Posterior vena cava (tissue), 2 donors: ENCODE measurements at regions of chr19 and their contacts with region 1.

Region 1: DNA sequence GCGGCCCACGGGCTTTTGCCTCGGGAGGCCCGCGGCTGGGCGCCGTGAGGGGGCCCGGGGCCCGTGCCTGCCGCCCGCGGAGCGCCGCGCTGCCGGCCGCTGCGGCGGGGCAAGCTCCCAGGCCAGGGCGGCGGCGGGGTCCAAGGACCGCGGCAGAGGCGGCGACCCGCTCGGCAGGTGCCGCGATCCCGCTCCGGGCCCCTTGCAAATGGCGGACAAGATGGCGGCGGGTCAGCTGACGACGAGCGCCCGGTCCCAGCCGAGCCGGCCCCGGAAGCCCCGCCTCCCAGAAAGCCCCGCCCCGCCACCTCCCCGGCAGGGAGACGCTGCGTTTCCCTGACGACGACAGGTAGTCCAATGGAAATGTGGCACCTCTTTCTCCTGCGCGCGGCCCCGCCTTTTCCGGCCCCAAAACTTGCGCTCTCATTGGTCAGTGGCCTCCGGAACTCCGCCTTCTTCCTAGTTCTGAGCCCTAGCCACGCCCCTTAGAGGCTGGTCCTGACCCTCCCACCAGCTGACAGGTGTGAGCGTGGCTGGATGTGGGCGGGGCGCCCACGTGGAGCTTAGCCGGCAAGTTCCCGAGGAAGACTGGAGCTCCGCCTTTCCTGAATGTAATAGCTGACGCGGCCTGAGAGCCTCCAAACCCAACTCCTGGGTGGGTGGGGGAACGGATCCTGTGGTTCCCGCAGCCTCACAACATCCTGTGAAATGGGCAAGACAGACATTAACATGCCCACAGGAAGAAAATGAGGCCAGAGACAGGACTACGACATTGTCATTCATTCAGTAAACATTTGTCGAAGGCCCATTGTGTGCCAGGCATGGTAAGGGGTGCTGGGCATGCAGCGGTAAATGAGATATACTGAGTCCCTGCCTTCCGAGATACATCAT is at the start of gene AP3D1:
- DNase-seq: peak; percentile 100
- total RNA-seq, gene AP3D1: 73.9 to 93.3 TPM

Region 2: DNA sequence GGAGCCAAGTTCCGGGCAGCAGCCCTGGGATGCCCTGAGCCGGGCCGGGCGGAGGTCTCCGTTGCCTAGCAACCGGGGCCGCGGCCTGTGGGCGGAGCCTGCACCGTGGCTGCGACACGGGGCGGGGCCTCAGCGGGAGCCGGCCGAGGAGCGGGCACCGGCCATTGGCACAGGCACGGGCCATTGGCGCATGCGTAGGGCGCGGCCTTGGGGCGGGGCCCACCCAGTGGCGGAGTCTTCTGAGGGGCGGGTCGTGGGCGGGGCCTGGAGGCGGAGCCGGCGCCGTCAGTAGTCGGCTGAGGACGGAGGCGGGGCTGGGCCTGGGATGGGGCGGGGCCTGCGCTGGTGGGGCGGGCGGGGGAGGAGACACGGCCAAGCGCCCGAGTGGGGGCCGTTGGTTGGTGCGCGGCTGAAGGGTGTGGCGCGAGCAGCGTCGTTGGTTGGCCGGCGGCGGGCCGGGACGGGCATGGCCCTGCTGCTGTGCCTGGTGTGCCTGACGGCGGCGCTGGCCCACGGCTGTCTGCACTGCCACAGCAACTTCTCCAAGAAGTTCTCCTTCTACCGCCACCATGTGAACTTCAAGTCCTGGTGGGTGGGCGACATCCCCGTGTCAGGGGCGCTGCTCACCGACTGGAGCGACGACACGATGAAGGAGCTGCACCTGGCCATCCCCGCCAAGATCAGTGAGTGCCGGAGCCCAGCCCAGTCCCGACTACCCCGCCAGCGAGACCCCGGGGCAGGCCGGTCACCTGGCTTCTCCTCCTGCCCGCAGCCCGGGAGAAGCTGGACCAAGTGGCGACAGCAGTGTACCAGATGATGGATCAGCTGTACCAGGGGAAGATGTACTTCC is 54.9 kb before region 1 on chr19 and contains the start of gene IZUMO4:
- intact Hi-C with region 1: no loop called
- DNase-seq: peak; percentile 100
- total RNA-seq, gene IZUMO4: 0.90 to 2.4 TPM

Region 3: GRCh38 chr19:2391118-2391725 is 239.6 kb after region 1 on chr19:
- intact Hi-C with region 1: loop called (anchors 5 to 10 kb)
- DNase-seq: no peak